ENCODE measurements at regions of chr5 and their contacts with region 1.

Region 1: GRCh38 chr5:37738057-37738691 is 101.7 kb downstream of the GDNF start:
- DNase-seq: no peak
- ATAC-seq: peak; percentile 62
- H3K4me3 ChIP-seq: no peak overlapping the region
- H3K4me3 Mint-ChIP-seq: no peak overlapping the region
- H3K27ac ChIP-seq: no peak overlapping the region
- H3K27ac Mint-ChIP-seq: peak overlapping the region in 1 of 9 donors; percentile 2
- H3K4me1 ChIP-seq: no peaks in the 10 kb centered on the region
- H3K4me1 Mint-ChIP-seq: peaks cover 0 to 24% (median 5%) of the 10 kb centered on the region in 7 donors
- H3K27me3 ChIP-seq: no peaks in the 10 kb centered on the region
- H3K27me3 Mint-ChIP-seq: no peaks in the 10 kb centered on the region

Region 2: GRCh38 chr5:37722236-37723146 is 15.7 kb before region 1 on chr5:
- CTCF ChIA-PET with region 1: no interaction called
- POLR2A ChIA-PET with region 1: no interaction called
- intact Hi-C with region 1: loop called in 1 of 2 experiments (anchors 1 kb)
- DNase-seq: no peak
- ATAC-seq: peak; percentile 72
- H3K4me3 ChIP-seq: no peak overlapping the region
- H3K4me3 Mint-ChIP-seq: peak overlapping the region in 1 of 10 donors; percentile 67
- H3K27ac ChIP-seq: no peak overlapping the region
- H3K27ac Mint-ChIP-seq: peak overlapping the region in 2 of 9 donors; percentile 32 to 85
- H3K4me1 ChIP-seq: peaks cover 0 to 9% of the 10 kb centered on the region in 2 donors
- H3K4me1 Mint-ChIP-seq: peaks cover 0 to 27% (median 0%) of the 10 kb centered on the region in 7 donors
- H3K27me3 ChIP-seq: no peaks in the 10 kb centered on the region
- H3K27me3 Mint-ChIP-seq: no peaks in the 10 kb centered on the region